PC-3 (cell line): ENCODE measurements at regions of chr5 and their contacts with region 1.

Region 1: DNA sequence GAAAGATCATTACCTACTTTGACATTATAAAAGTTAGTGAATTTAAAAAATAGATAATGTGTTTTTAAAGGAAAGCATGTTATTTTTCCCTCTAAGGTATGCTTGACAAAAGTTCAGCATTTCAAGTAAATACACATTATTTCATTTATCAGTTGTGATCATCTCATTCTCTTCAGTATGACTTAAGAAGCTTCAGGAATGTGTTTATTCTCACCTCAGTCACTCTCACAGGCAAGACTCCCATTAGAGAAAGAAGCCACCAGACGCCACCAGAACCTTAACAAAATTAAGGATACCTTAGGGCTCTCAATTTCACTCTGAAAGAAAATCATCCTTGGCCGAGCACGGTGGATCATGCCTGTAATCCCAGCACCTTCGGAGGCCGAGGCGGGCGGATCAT is 178.4 kb downstream of the EFNA5 start:
- DNase-seq: no peak
- ATAC-seq: no peak
- H3K4me3 ChIP-seq: no peak overlapping the region
- H3K27ac ChIP-seq: no peak overlapping the region
- H3K4me1 ChIP-seq: peaks cover 6% of the 10 kb centered on the region
- H3K27me3 ChIP-seq: no peaks in the 10 kb centered on the region
- CTCF ChIP-seq: no peak

Region 2: GRCh38 chr5:107289030-107289714 is 203.2 kb before region 1 on chr5:
- CTCF ChIA-PET with region 1: no interaction called
- POLR2A ChIA-PET with region 1: interaction called, 11 read pairs
- intact Hi-C with region 1: no loop called
- DNase-seq: no peak
- ATAC-seq: no peak
- H3K4me3 ChIP-seq: no peak overlapping the region
- H3K27ac ChIP-seq: no peak overlapping the region
- H3K4me1 ChIP-seq: peaks cover 15% of the 10 kb centered on the region
- H3K27me3 ChIP-seq: no peaks in the 10 kb centered on the region
- CTCF ChIP-seq: no peak

Region 3: GRCh38 chr5:107523029-107523680 is 30.8 kb after region 1 on chr5:
- CTCF ChIA-PET with region 1: no interaction called
- POLR2A ChIA-PET with region 1: no interaction called
- intact Hi-C with region 1: no loop called
- DNase-seq: peak; percentile 85
- ATAC-seq: peak; percentile 91
- H3K4me3 ChIP-seq: peak overlapping the region; percentile 59
- H3K27ac ChIP-seq: peak overlapping the region; percentile 92
- H3K4me1 ChIP-seq: peaks cover 50% of the 10 kb centered on the region
- H3K27me3 ChIP-seq: no peaks in the 10 kb centered on the region
- CTCF ChIP-seq: peak; percentile 23; the same call in 1 of the 2 replicates